GM12878 (cell line): ENCODE measurements at regions of chr19 and their contacts with region 1.

Region 1: DNA sequence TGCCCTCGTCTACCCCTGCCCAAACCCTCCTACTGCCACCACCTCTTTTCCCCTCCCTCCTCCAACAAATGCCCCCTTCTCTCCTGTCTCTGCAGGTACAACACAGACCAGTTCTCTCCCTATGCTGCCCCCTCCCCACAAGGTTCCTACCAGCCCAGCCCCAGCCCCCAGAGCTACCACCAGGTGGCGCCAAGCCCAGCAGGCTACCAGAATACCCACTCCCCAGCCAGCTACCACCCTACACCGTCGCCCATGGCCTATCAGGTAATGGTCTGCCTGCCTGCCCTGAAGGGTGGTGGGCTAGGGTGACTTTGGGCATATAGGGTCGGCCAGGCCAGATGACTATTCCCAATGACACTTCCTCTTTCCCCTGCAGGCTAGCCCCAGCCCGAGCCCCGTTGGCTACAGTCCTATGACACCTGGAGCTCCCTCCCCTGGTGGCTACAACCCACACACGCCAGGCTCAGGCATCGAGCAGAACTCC is 6.5 kb upstream of the TIMM50 start:
- DNase-seq: no peak
- ATAC-seq: peak; percentile 93
- H3K4me3 ChIP-seq: no peak overlapping the region
- H3K27ac ChIP-seq: no peak overlapping the region
- H3K4me1 ChIP-seq: no peaks in the 10 kb centered on the region
- H3K27me3 ChIP-seq: no peaks in the 10 kb centered on the region
- CTCF ChIP-seq: peak; percentile 65 to 94 (median 78)
- EP300 ChIP-seq: no peak
- POLR2A ChIP-seq: no peak
- RAD21 ChIP-seq: peak; percentile 51

Region 2: DNA sequence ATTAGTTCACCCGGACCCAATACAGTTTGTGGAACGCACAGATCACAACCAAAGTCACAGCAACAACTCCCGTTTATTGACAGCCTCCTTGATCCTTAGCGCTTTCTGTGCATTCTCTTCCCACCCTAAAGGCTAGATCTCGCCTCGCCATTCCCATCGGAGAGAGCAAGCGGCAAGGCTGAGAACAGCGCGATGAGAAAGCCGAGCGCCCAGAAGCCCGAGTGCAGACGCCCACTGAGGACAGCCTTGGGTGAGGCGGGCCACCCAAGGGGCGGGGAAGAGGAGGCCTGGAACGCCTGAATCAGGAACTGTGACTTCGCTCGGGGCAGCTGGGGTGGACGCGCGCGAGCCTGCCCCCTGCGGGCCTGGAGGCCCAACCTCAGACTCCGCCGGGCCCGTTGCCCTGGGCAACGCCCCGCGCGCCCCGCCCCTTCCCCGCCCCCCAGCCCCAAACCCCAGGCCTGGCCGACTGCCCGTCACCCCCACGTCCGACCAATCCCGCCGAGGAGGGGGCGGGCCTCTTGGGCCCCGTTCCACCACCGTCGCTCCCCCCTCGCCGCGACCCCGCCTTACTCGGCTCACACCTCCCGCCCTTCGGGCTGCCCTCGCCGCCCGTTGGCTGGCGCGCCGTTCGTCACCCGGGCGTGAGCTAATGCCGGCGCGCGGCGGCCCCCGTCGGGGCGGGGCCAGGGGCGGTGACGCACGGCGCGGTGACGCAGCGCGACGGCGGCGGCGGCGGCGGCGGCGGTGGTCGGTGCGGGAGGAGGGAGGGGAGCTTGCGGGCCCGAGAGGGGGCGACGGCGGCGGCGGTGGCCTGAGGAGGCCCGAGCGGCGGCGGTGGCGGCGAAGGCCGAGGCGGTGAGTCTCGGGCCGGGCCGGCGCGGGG is 132.2 kb before region 1 on chr19 and contains the start of gene SAMD4B:
- CTCF ChIA-PET with region 1: no interaction called
- POLR2A ChIA-PET with region 1: no interaction called
- RAD21 ChIA-PET with region 1: no interaction called
- SMC1A ChIA-PET with region 1: no interaction called
- in situ Hi-C with region 1: no loop called
- intact Hi-C with region 1: no loop called
- DNase-seq: peak; percentile 87
- ATAC-seq: peak; percentile 96
- H3K4me3 ChIP-seq: peak within 1 kb of the TSS; percentile 95
- H3K27ac ChIP-seq: peak within 1 kb of the TSS; percentile 82
- H3K4me1 ChIP-seq: peaks cover 14% of the 10 kb centered on the region
- H3K27me3 ChIP-seq: no peaks in the 10 kb centered on the region
- CTCF ChIP-seq: peak; percentile 57 to 91 (median 65); a peak in 5 of 6 replicates
- EP300 ChIP-seq: no peak
- POLR2A ChIP-seq: peak; percentile 99
- RAD21 ChIP-seq: peak; percentile 2; the same call in 1 of the 2 replicates
- polyA plus RNA-seq, gene SAMD4B: 2.4 to 3.8 TPM

Region 3: GRCh38 chr19:39502640-39503417 is 28.6 kb after region 1 on chr19:
- CTCF ChIA-PET with region 1: interaction called, 19 read pairs
- POLR2A ChIA-PET with region 1: interaction called, 4 read pairs
- RAD21 ChIA-PET with region 1: interaction called, 6 read pairs
- SMC1A ChIA-PET with region 1: interaction called, 3 read pairs
- in situ Hi-C with region 1: no loop called
- intact Hi-C with region 1: no loop called
- DNase-seq: no peak
- ATAC-seq: peak; percentile 46
- H3K4me3 ChIP-seq: no peak overlapping the region
- H3K27ac ChIP-seq: no peak overlapping the region
- H3K4me1 ChIP-seq: peaks cover 15% of the 10 kb centered on the region
- H3K27me3 ChIP-seq: peaks cover 0 to 16% of the 10 kb centered on the region in 2 experiments; a peak in 3 of 4 replicates
- CTCF ChIP-seq: peak; percentile 70 to 80 (median 75)
- EP300 ChIP-seq: no peak
- POLR2A ChIP-seq: no peak
- RAD21 ChIP-seq: peak; percentile 30; the same call in 1 of the 2 replicates